Dendritic cell treated with granulocyte-macrophage colony-stimulating factor and Interleukin-4, amounts not matched to agents 40 ng/mL and 50 ng/mL, for 4 days (primary cell): ENCODE measurements at regions of chr1 and their contacts with region 1.

Region 1: GRCh38 chr1:13748610-13749505 is 48.9 kb downstream of the PRDM2 start:
- H3K4me3 Mint-ChIP-seq: peak overlapping the region; percentile 78
- H3K27ac Mint-ChIP-seq: peak overlapping the region; percentile 90
- H3K4me1 Mint-ChIP-seq: peaks cover 50% of the 10 kb centered on the region
- H3K27me3 Mint-ChIP-seq: no peaks in the 10 kb centered on the region

Region 2: GRCh38 chr1:13699936-13700520 is 48.8 kb before region 1 on chr1 and contains the start of gene PRDM2:
- intact Hi-C with region 1: loop called (anchors 2 kb)
- H3K4me3 Mint-ChIP-seq: peak within 1 kb of the TSS; percentile 84
- H3K27ac Mint-ChIP-seq: peak within 1 kb of the TSS; percentile 94
- H3K4me1 Mint-ChIP-seq: peaks cover 27% of the 10 kb centered on the region
- H3K27me3 Mint-ChIP-seq: peaks cover 10% of the 10 kb centered on the region

Region 3: GRCh38 chr1:13781907-13782644 is 33.2 kb after region 1 on chr1:
- intact Hi-C with region 1: loop called (anchors 5 kb)
- H3K4me3 Mint-ChIP-seq: peak overlapping the region; percentile 90
- H3K27ac Mint-ChIP-seq: peak overlapping the region; percentile 93
- H3K4me1 Mint-ChIP-seq: peaks cover 62% of the 10 kb centered on the region
- H3K27me3 Mint-ChIP-seq: no peaks in the 10 kb centered on the region

Region 4: GRCh38 chr1:13792419-13792818 is 43.6 kb after region 1 on chr1:
- intact Hi-C with region 1: loop called (anchors 5 kb)
- H3K4me3 Mint-ChIP-seq: no peak overlapping the region
- H3K27ac Mint-ChIP-seq: no peak overlapping the region
- H3K4me1 Mint-ChIP-seq: peaks cover 54% of the 10 kb centered on the region
- H3K27me3 Mint-ChIP-seq: no peaks in the 10 kb centered on the region

Region 5: GRCh38 chr1:13809461-13810159 is 60.8 kb after region 1 on chr1:
- intact Hi-C with region 1: loop called (anchors 2 kb)
- H3K4me3 Mint-ChIP-seq: no peak overlapping the region
- H3K27ac Mint-ChIP-seq: no peak overlapping the region
- H3K4me1 Mint-ChIP-seq: peaks cover 32% of the 10 kb centered on the region
- H3K27me3 Mint-ChIP-seq: no peaks in the 10 kb centered on the region